ENCODE measurements at regions of chr3 and their contacts with region 1.

Region 1: DNA sequence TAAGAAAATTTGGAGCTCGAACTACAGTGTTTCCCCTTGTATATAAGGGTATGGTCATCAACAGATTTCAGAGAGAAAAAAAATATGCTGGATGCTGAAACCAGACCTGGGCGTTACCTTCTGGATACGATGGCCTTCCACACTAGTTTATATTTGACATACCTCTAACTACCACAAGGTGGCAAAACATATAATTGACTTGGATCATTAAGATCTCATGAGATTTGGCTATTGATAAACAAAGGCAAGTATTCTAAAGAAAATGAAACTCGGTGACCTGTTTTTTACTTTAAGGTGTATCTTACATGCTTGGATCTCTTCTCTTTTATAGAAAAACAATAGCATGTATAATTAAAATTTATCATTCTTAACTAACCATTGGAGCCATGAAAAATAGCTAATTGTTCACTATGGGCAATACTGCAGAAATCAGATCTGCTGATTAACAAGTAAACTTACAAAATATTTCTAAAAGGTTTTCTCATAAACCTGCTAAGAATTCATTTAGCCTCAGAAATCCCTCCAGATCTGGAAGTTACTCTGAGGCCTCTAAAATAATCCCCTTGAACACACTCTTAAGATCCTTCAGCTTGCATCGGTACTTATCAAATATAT is 300.6 kb upstream of the KCNH8 start:
- DNase-seq: peak; percentile 44
- H3K4me3 Mint-ChIP-seq: no peak overlapping the region
- H3K27ac Mint-ChIP-seq: no peak overlapping the region
- H3K4me1 Mint-ChIP-seq: no peaks in the 10 kb centered on the region
- H3K27me3 Mint-ChIP-seq: no peaks in the 10 kb centered on the region
- CTCF ChIP-seq: peak; percentile 22

Region 2: GRCh38 chr3:18862069-18862468 is 14.4 kb after region 1 on chr3:
- CTCF ChIA-PET with region 1: interaction called, 11 read pairs
- POLR2A ChIA-PET with region 1: no interaction called
- intact Hi-C with region 1: no loop called
- DNase-seq: no peak
- H3K4me3 Mint-ChIP-seq: no peak overlapping the region
- H3K27ac Mint-ChIP-seq: peak overlapping the region; percentile 5
- H3K4me1 Mint-ChIP-seq: peaks cover 7% of the 10 kb centered on the region
- H3K27me3 Mint-ChIP-seq: no peaks in the 10 kb centered on the region
- CTCF ChIP-seq: no peak

Measured in MCF 10A (cell line).